ENCODE measurements at regions of chr6 and their contacts with region 1.

Region 1: GRCh38 chr6:87279196-87279595 is 43.2 kb upstream of the SMIM8 start:
- DNase-seq: no peak
- H3K4me3 ChIP-seq: no peak overlapping the region
- H3K27ac ChIP-seq: no peak overlapping the region
- H3K4me1 ChIP-seq: no peaks in the 10 kb centered on the region
- H3K27me3 ChIP-seq: no peaks in the 10 kb centered on the region
- CTCF ChIP-seq: no peak
- POLR2A ChIP-seq: no peak

Region 2: DNA sequence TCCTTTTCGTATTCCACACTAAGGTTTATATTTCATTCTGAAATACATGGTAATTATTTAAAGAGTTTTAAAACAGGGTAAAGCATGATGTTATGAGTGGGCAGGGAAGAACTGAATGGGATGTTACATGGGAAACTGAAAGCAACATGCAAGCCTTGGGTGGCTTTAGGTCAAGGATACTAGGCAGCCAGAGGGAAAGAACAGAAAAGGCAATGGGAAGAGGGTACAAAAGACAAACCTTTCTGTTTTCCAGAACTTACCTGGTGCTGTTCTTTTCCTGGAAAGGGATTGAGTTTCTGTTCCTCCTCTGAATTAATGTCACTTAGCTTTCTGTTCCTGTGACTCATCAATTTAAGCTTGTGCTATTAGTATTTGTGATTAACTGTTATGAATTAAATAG is 28.0 kb before region 1 on chr6:
- intact Hi-C with region 1: loop called (anchors 2 kb)
- DNase-seq: no peak
- H3K4me3 ChIP-seq: no peak overlapping the region
- H3K27ac ChIP-seq: no peak overlapping the region
- H3K4me1 ChIP-seq: no peaks in the 10 kb centered on the region
- H3K27me3 ChIP-seq: no peaks in the 10 kb centered on the region
- CTCF ChIP-seq: no peak
- POLR2A ChIP-seq: no peak